Endothelial cell of umbilical vein (primary cell): ENCODE measurements at regions of chr15 and their contacts with region 1.

Region 1: GRCh38 chr15:74664028-74664616 is 31.7 kb downstream of the EDC3 start:
- DNase-seq: peak; percentile 88
- H3K4me3 ChIP-seq: peak overlapping the region in 1 of 3 experiments; percentile 7
- H3K27ac ChIP-seq: peak overlapping the region; percentile 85
- H3K4me1 ChIP-seq: peaks cover 35% of the 10 kb centered on the region
- H3K27me3 ChIP-seq: no peaks in the 10 kb centered on the region
- CTCF ChIP-seq: no peak
- POLR2A ChIP-seq: peak; percentile 34

Region 2: GRCh38 chr15:74653426-74654123 is 10.5 kb before region 1 on chr15:
- CTCF ChIA-PET with region 1: interaction called, 10 read pairs
- POLR2A ChIA-PET with region 1: interaction called, 6 read pairs
- dilution Hi-C with region 1: no loop called
- intact Hi-C with region 1: loop called (anchors 1 kb)
- DNase-seq: peak; percentile 61
- H3K4me3 ChIP-seq: no peak overlapping the region
- H3K27ac ChIP-seq: peak overlapping the region; percentile 53
- H3K4me1 ChIP-seq: peaks cover 40% of the 10 kb centered on the region
- H3K27me3 ChIP-seq: no peaks in the 10 kb centered on the region
- CTCF ChIP-seq: no peak
- POLR2A ChIP-seq: no peak